IMR-90 (cell line): ENCODE measurements at regions of chr20 and their contacts with region 1.

Region 1: GRCh38 chr20:47501483-47502270 is at the start of gene NCOA3:
- DNase-seq: peak; percentile 92
- ATAC-seq: peak; percentile 98
- H3K4me3 ChIP-seq: peak within 1 kb of the TSS; percentile 60
- H3K27ac ChIP-seq: peak within 1 kb of the TSS; percentile 85
- H3K4me1 ChIP-seq: peaks cover 6% of the 10 kb centered on the region
- H3K27me3 ChIP-seq: no peaks in the 10 kb centered on the region
- CTCF ChIP-seq: peak; percentile 38
- POLR2A ChIP-seq: peak; percentile 96
- RAD21 ChIP-seq: peak; percentile 41
- total RNA-seq, gene NCOA3: 27.2 and 29.0 TPM in 2 replicates

Region 2: DNA sequence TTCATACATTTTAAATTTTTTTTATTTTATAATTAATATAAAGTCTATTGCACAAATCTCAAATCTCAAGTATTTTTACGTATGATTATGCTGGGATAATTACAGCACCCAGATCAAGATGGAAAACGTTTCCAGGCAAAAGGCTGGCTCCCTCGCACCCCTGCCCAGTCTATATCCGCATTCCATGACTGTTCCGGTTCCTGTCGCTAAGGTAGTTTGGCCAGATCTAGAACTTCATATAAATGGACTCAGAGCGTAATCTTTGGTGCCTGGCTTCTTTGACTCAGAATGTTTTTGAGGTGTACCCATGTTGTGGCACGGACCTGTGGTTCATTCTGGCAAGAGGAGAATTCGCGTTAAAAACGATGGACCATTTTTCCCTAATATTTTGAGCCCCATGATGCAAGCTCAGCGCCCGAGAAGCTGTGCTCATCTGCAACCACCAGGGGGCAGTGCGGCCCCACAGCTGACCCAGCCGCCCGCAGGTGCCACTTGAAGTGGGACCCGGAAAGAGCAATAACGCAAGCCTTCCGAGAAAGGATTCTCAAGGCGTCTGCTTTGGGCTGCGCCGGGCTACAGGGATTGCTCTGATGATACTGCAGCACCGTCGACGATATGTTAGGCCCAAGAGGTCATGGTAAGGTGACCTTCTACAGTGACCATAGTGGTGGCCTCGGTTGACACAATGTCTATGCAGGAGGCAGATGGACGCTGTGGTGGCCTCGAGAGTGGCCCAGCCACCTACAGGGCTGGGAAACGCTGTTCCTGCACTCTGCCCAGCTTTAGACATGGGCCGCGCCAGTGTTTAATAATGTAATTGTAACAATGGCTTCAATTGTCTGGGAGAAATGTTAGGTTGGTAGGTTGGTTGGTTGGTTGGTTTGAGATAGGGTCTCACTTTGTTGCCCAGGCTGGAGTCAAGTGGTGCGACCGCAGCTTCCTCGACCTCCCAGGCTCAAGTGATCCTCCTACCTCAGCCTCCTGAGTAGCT is 305.3 kb before region 1 on chr20:
- CTCF ChIA-PET with region 1: no interaction called
- POLR2A ChIA-PET with region 1: no interaction called
- dilution Hi-C with region 1: no loop called
- in situ Hi-C with region 1: no loop called
- intact Hi-C with region 1: loop called (anchors 2 kb)
- DNase-seq: peak; percentile 60
- ATAC-seq: peak; percentile 94
- H3K4me3 ChIP-seq: no peak overlapping the region
- H3K27ac ChIP-seq: no peak overlapping the region
- H3K4me1 ChIP-seq: peaks cover 3% of the 10 kb centered on the region; the same call in 1 of the 2 replicates
- H3K27me3 ChIP-seq: no peaks in the 10 kb centered on the region
- CTCF ChIP-seq: peak; percentile 96
- POLR2A ChIP-seq: peak; percentile 42; the same call in 1 of the 2 replicates
- RAD21 ChIP-seq: peak; percentile 96

Region 3: DNA sequence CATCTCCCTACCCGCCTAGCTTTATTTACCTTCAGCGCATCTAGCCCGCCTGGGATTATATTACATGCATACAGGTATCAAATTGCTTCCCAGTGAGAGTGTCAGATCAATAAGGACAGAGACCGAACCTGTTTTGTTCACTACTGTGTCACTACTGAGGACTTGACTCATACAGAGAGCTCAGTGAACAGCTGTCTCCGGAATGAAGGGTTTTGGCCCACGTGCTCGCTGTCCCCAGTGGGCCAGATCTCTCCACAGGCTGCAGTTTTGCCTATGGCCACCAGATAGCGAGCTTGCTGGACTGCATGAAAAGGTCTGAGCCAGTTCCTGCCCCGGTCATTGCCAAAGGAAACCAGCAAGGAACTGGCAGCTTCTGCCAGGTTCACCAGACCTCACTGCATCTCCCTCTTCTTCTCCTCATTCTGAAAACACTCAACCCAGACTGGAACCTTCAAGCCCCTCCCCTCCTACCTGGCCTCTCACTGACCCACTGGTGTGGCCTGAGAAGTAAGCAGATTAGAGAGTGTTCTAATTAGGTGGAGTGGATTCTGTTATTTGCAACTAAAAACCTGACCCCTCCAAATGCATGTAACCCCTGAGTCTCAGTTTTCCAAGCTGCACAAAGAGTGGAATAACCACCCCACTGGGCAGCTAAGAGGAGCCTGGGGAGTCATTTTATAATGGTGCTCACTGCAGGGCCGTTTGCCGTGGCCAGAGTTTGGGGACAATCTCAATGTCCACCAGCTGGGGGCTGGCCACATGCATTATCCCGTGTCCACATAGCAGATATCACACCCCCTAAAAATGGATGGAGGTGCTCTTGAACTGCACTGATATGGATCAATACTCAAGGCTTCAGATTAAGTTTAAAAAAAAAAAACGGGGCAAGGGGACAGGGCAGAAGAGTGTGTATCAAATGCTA is 295.8 kb before region 1 on chr20:
- CTCF ChIA-PET with region 1: no interaction called
- POLR2A ChIA-PET with region 1: no interaction called
- dilution Hi-C with region 1: no loop called
- in situ Hi-C with region 1: no loop called
- intact Hi-C with region 1: loop called (anchors 2 kb)
- DNase-seq: peak; percentile 79
- ATAC-seq: peak; percentile 83
- H3K4me3 ChIP-seq: no peak overlapping the region
- H3K27ac ChIP-seq: no peak overlapping the region
- H3K4me1 ChIP-seq: peaks cover 2% of the 10 kb centered on the region; the same call in 1 of the 2 replicates
- H3K27me3 ChIP-seq: no peaks in the 10 kb centered on the region
- CTCF ChIP-seq: peak; percentile 63
- POLR2A ChIP-seq: no peak
- RAD21 ChIP-seq: peak; percentile 65

Region 4: GRCh38 chr20:47576516-47577033 is 74.9 kb after region 1 on chr20:
- CTCF ChIA-PET with region 1: no interaction called
- POLR2A ChIA-PET with region 1: interaction called, 8 read pairs
- dilution Hi-C with region 1: no loop called
- in situ Hi-C with region 1: no loop called
- intact Hi-C with region 1: loop called (anchors 5 kb)
- DNase-seq: peak; percentile 90
- ATAC-seq: peak; percentile 93
- H3K4me3 ChIP-seq: no peak overlapping the region
- H3K27ac ChIP-seq: no peak overlapping the region
- H3K4me1 ChIP-seq: peaks cover 4% of the 10 kb centered on the region
- H3K27me3 ChIP-seq: no peaks in the 10 kb centered on the region
- CTCF ChIP-seq: no peak
- POLR2A ChIP-seq: no peak
- RAD21 ChIP-seq: no peak

Region 5: GRCh38 chr20:47606983-47607613 is 105.4 kb after region 1 on chr20:
- CTCF ChIA-PET with region 1: interaction called, 3 read pairs
- POLR2A ChIA-PET with region 1: no interaction called
- dilution Hi-C with region 1: no loop called
- in situ Hi-C with region 1: no loop called
- intact Hi-C with region 1: loop called (anchors 5 kb)
- DNase-seq: peak; percentile 56
- ATAC-seq: peak; percentile 52
- H3K4me3 ChIP-seq: no peak overlapping the region
- H3K27ac ChIP-seq: peak overlapping the region; percentile 37; the same call in 1 of the 2 replicates
- H3K4me1 ChIP-seq: peaks cover 7% of the 10 kb centered on the region
- H3K27me3 ChIP-seq: no peaks in the 10 kb centered on the region
- CTCF ChIP-seq: no peak
- POLR2A ChIP-seq: no peak
- RAD21 ChIP-seq: no peak

Region 6: GRCh38 chr20:49140834-49141233 is 1639.2 kb after region 1 on chr20:
- CTCF ChIA-PET with region 1: no interaction called
- POLR2A ChIA-PET with region 1: no interaction called
- dilution Hi-C with region 1: no loop called
- in situ Hi-C with region 1: no loop called
- intact Hi-C with region 1: no loop called
- DNase-seq: no peak
- ATAC-seq: no peak
- H3K4me3 ChIP-seq: no peak overlapping the region
- H3K27ac ChIP-seq: no peak overlapping the region
- H3K4me1 ChIP-seq: peaks cover 2% of the 10 kb centered on the region; the same call in 1 of the 2 replicates
- H3K27me3 ChIP-seq: no peaks in the 10 kb centered on the region
- CTCF ChIP-seq: no peak
- POLR2A ChIP-seq: no peak
- RAD21 ChIP-seq: no peak